Activated naive CD4-positive, alpha-beta T cell treated with anti-CD3 and anti-CD28 coated beads for 36 hours (primary cell): ENCODE measurements at regions of chr18 and their contacts with region 1.

Region 1: GRCh38 chr18:63367053-63367953 is at the start of gene KDSR:
- DNase-seq: peak; percentile 85
- H3K4me3 Mint-ChIP-seq: peak within 1 kb of the TSS; percentile 84
- H3K27ac Mint-ChIP-seq: peak within 1 kb of the TSS; percentile 79
- H3K4me1 Mint-ChIP-seq: peaks cover 26% of the 10 kb centered on the region
- H3K27me3 Mint-ChIP-seq: no peaks in the 10 kb centered on the region
- total RNA-seq, gene KDSR: 75.2 to 81.5 TPM

Region 2: GRCh38 chr18:63216516-63217311 is 150.6 kb before region 1 on chr18:
- CTCF ChIA-PET with region 1: no interaction called
- intact Hi-C with region 1: loop called (anchors 2 kb)
- DNase-seq: peak; percentile 48
- H3K4me3 Mint-ChIP-seq: peak overlapping the region; percentile 64
- H3K27ac Mint-ChIP-seq: peak overlapping the region; percentile 94
- H3K4me1 Mint-ChIP-seq: peaks cover 89% of the 10 kb centered on the region
- H3K27me3 Mint-ChIP-seq: no peaks in the 10 kb centered on the region

Region 3: DNA sequence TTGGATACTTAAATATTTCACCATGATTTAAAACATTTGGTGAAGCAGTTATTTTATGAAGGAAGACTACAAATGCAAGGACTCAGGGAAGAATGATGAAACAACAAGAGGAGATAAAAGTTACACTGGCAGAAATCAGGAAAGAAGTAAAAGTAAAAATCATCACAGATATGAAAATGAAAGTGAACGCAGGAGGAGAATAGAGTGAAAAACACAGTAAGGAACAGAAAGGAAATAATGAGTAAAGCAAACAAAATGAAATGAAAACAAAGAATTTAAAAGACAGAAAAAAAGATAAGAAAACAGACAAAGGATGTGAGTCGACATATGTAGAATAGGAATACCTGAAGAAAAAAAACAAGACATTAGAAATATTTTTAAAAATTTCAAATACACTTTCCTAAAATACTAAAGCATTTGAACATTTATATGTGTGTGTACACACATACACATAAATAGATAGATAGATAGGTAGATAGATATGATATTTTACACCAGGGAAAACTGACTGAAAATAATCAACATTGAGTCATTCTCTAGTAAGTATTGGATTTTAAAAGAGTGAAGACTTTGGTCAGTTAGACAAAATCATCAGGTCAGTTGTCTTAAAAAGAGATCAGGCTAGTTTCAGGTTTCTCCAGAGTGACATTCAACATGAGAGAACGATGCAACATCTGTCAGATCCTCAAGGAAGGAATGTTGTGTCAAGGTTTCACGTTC is 11.8 kb after region 1 on chr18:
- CTCF ChIA-PET with region 1: no interaction called
- intact Hi-C with region 1: loop called (anchors 1 kb)
- DNase-seq: no peak
- H3K4me3 Mint-ChIP-seq: peak overlapping the region; percentile 49
- H3K27ac Mint-ChIP-seq: peak overlapping the region; percentile 64
- H3K4me1 Mint-ChIP-seq: peaks cover 17% of the 10 kb centered on the region
- H3K27me3 Mint-ChIP-seq: no peaks in the 10 kb centered on the region

Region 4: GRCh38 chr18:63422087-63422809 is 54.9 kb after region 1 on chr18 and contains the start of gene VPS4B:
- CTCF ChIA-PET with region 1: interaction called, 6 read pairs
- intact Hi-C with region 1: loop called (anchors 1 kb)
- DNase-seq: peak; percentile 100
- H3K4me3 Mint-ChIP-seq: peak within 1 kb of the TSS; percentile 83
- H3K27ac Mint-ChIP-seq: peak within 1 kb of the TSS; percentile 95
- H3K4me1 Mint-ChIP-seq: peaks cover 28% of the 10 kb centered on the region
- H3K27me3 Mint-ChIP-seq: no peaks in the 10 kb centered on the region
- total RNA-seq, gene VPS4B: 28.7 to 30.1 TPM

Region 5: GRCh38 chr18:63439334-63439733 is 72.0 kb after region 1 on chr18:
- CTCF ChIA-PET with region 1: interaction called, 11 read pairs
- intact Hi-C with region 1: no loop called
- DNase-seq: peak; percentile 60
- H3K4me3 Mint-ChIP-seq: no peak overlapping the region
- H3K27ac Mint-ChIP-seq: no peak overlapping the region
- H3K4me1 Mint-ChIP-seq: peaks cover 2% of the 10 kb centered on the region
- H3K27me3 Mint-ChIP-seq: no peaks in the 10 kb centered on the region

Region 6: GRCh38 chr18:63465059-63465458 is 97.8 kb after region 1 on chr18:
- CTCF ChIA-PET with region 1: no interaction called
- intact Hi-C with region 1: no loop called
- DNase-seq: no peak
- H3K4me3 Mint-ChIP-seq: no peak overlapping the region
- H3K27ac Mint-ChIP-seq: no peak overlapping the region
- H3K4me1 Mint-ChIP-seq: peaks cover 5% of the 10 kb centered on the region
- H3K27me3 Mint-ChIP-seq: peaks cover 5% of the 10 kb centered on the region

Region 7: GRCh38 chr18:63949068-63949737 is 581.9 kb after region 1 on chr18 and contains the start of gene HMSD:
- CTCF ChIA-PET with region 1: no interaction called
- intact Hi-C with region 1: loop called (anchors 5 kb)
- DNase-seq: peak; percentile 89
- H3K4me3 Mint-ChIP-seq: peak within 1 kb of the TSS; percentile 82
- H3K27ac Mint-ChIP-seq: peak within 1 kb of the TSS; percentile 86
- H3K4me1 Mint-ChIP-seq: peaks cover 43% of the 10 kb centered on the region
- H3K27me3 Mint-ChIP-seq: peaks cover 26% of the 10 kb centered on the region
- total RNA-seq, gene HMSD: 25.0 to 31.7 TPM